Ascending aorta (tissue), 2 donors: ENCODE measurements at regions of chr2 and their contacts with region 1.

Region 1: GRCh38 chr2:152189622-152190495 is 14.3 kb upstream of the STAM2 start:
- DNase-seq: no peak
- H3K4me3 ChIP-seq: no peak overlapping the region
- H3K27ac ChIP-seq: no peak overlapping the region
- H3K4me1 ChIP-seq: no peaks in the 10 kb centered on the region
- H3K27me3 ChIP-seq: no peaks in the 10 kb centered on the region
- CTCF ChIP-seq: peak; percentile 75 to 88 (median 88)

Region 2: DNA sequence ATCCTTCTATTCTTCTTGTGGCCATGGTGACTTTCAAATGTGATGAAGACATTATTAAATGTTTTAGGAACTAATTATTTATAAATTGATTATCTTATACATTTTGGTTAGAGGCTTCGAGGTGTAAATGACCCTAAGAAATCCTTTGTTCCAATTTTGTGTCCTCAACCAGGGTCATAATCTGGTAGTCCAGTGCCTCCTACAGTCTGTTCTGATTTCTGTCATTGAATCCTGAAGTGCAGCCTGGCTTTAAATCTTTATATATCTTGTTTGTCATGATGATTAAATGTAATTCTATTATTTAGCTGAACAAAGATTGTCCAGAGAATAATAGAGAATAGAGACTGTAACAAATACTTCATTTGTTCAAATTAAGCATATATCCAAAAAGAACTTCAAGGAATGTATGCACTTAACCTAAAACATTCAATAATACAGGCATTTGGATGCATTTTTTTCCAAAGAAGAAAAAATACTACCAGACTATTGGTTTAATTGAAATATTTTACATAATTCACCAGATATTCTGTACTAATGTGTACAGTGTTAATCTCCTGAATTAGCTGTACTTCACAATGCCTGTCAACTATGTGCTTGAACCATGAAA is 437.6 kb after region 1 on chr2:
- intact Hi-C with region 1: loop called (anchors 2 kb)
- DNase-seq: no peak
- H3K4me3 ChIP-seq: no peak overlapping the region
- H3K27ac ChIP-seq: peak overlapping the region in 1 of 2 donors; percentile 5
- H3K4me1 ChIP-seq: peaks cover 0 to under 1% of the 10 kb centered on the region in 2 donors
- H3K27me3 ChIP-seq: no peaks in the 10 kb centered on the region
- CTCF ChIP-seq: peak; percentile 47 to 76 (median 57)

Region 3: GRCh38 chr2:152635635-152636298 is 445.9 kb after region 1 on chr2:
- intact Hi-C with region 1: loop called (anchors 2 kb)
- DNase-seq: peak in 1 of 2 donors; percentile 69
- H3K4me3 ChIP-seq: no peak overlapping the region
- H3K27ac ChIP-seq: no peak overlapping the region
- H3K4me1 ChIP-seq: no peaks in the 10 kb centered on the region
- H3K27me3 ChIP-seq: no peaks in the 10 kb centered on the region
- CTCF ChIP-seq: peak; percentile 66 to 76 (median 71)